Activated CD4-positive, alpha-beta memory T cell treated with anti-CD3 and anti-CD28 coated beads for 36 hours (primary cell): ENCODE measurements at regions of chr4 and their contacts with region 1.

Region 1: GRCh38 chr4:55345980-55346850 is at the start of gene SRD5A3:
- DNase-seq: peak; percentile 85
- H3K4me3 Mint-ChIP-seq: peak within 1 kb of the TSS; percentile 82
- H3K27ac Mint-ChIP-seq: peak within 1 kb of the TSS; percentile 84
- H3K4me1 Mint-ChIP-seq: peaks cover 28% of the 10 kb centered on the region
- H3K27me3 Mint-ChIP-seq: no peaks in the 10 kb centered on the region
- total RNA-seq, gene SRD5A3: 19.2 to 19.7 TPM

Region 2: GRCh38 chr4:55395529-55396307 is 49.5 kb after region 1 on chr4 and contains the start of gene TMEM165:
- CTCF ChIA-PET with region 1: interaction called, 53 read pairs
- POLR2A ChIA-PET with region 1: interaction called, 10 read pairs
- intact Hi-C with region 1: loop called (anchors 1 kb)
- DNase-seq: peak; percentile 94
- H3K4me3 Mint-ChIP-seq: peak within 1 kb of the TSS; percentile 90
- H3K27ac Mint-ChIP-seq: peak within 1 kb of the TSS; percentile 93
- H3K4me1 Mint-ChIP-seq: peaks cover 30% of the 10 kb centered on the region
- H3K27me3 Mint-ChIP-seq: no peaks in the 10 kb centered on the region
- total RNA-seq, gene TMEM165: 50.4 to 56.8 TPM

Region 3: GRCh38 chr4:55546756-55547465 is 200.7 kb after region 1 on chr4 and contains the start of gene CLOCK:
- CTCF ChIA-PET with region 1: interaction called, 11 read pairs
- POLR2A ChIA-PET with region 1: interaction called, 4 read pairs
- intact Hi-C with region 1: loop called (anchors 2 kb)
- DNase-seq: peak; percentile 88
- H3K4me3 Mint-ChIP-seq: peak within 1 kb of the TSS; percentile 88
- H3K27ac Mint-ChIP-seq: peak within 1 kb of the TSS; percentile 86
- H3K4me1 Mint-ChIP-seq: peaks cover 52% of the 10 kb centered on the region
- H3K27me3 Mint-ChIP-seq: peaks cover 5% of the 10 kb centered on the region
- total RNA-seq, gene CLOCK: 10.9 to 12.0 TPM

Region 4: GRCh38 chr4:55853484-55854046 is 507.4 kb after region 1 on chr4 and contains the start of gene EXOC1:
- CTCF ChIA-PET with region 1: no interaction called
- POLR2A ChIA-PET with region 1: no interaction called
- intact Hi-C with region 1: loop called (anchors 5 kb)
- DNase-seq: peak; percentile 99
- H3K4me3 Mint-ChIP-seq: peak within 1 kb of the TSS; percentile 7
- H3K27ac Mint-ChIP-seq: peak within 1 kb of the TSS; percentile 82
- H3K4me1 Mint-ChIP-seq: peaks cover 33% of the 10 kb centered on the region
- H3K27me3 Mint-ChIP-seq: no peaks in the 10 kb centered on the region
- total RNA-seq, gene EXOC1: 21.9 to 22.4 TPM